ENCODE measurements at regions of chr12 and their contacts with region 1.

Region 1: GRCh38 chr12:10771132-10771733 is 31.2 kb downstream of the TAS2R7 start:
- DNase-seq: peak; percentile 51
- ATAC-seq: peak; percentile 86
- H3K4me3 ChIP-seq: no peak overlapping the region
- H3K27ac ChIP-seq: no peak overlapping the region
- H3K4me1 ChIP-seq: no peaks in the 10 kb centered on the region
- H3K27me3 ChIP-seq: peaks cover 24% of the 10 kb centered on the region
- CTCF ChIP-seq: peak; percentile 87
- POLR2A ChIP-seq: no peak
- RAD21 ChIP-seq: peak; percentile 82

Region 2: DNA sequence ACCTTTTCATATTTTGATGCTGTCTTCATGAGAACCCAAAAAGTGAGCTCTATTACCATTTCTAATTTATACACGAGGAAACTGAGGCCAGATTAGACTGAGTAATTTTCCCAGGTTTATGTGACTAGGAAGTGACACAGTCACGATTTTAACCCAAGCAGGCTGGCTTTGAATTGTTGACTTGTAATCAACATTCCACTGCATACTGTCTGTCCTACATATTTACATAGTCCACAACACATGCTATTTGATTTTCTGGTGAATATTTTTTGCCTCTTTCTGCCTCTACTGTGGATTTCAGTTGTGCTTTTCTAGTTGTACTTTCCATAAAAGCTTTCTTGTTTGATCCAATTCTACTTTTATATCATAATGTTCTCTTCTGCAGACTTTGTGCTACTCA is 23.0 kb after region 1 on chr12:
- CTCF ChIA-PET with region 1: no interaction called
- POLR2A ChIA-PET with region 1: no interaction called
- dilution Hi-C with region 1: no loop called
- in situ Hi-C with region 1: no loop called
- intact Hi-C with region 1: no loop called
- DNase-seq: no peak
- ATAC-seq: no peak
- H3K4me3 ChIP-seq: no peak overlapping the region
- H3K27ac ChIP-seq: no peak overlapping the region
- H3K4me1 ChIP-seq: no peaks in the 10 kb centered on the region
- H3K27me3 ChIP-seq: no peaks in the 10 kb centered on the region
- CTCF ChIP-seq: no peak
- POLR2A ChIP-seq: no peak
- RAD21 ChIP-seq: no peak

Region 3: DNA sequence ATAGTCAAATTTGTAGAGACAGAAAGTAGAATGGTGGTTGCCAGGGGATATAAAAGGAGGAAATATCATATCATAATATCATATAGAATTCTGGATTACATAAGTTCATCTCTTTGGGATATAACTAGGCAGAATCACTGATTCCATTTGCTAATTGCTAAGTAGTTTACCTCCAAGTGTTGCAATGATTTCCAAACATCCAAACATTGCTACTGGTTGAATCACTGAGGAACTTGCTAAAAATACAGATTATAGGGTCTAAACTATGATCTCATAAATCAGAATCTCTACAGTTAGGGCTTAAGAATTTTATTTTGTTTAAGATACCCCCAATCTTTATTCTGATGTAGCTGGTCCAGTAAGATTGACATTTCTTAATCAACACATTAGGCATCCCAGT is 431.6 kb after region 1 on chr12:
- CTCF ChIA-PET with region 1: interaction called, 16 read pairs
- POLR2A ChIA-PET with region 1: interaction called, 4 read pairs
- dilution Hi-C with region 1: loop called (anchors 25 kb)
- in situ Hi-C with region 1: loop called (anchors 5 kb)
- intact Hi-C with region 1: loop called (anchors 1 kb)
- DNase-seq: no peak
- ATAC-seq: no peak
- H3K4me3 ChIP-seq: no peak overlapping the region
- H3K27ac ChIP-seq: no peak overlapping the region
- H3K4me1 ChIP-seq: no peaks in the 10 kb centered on the region
- H3K27me3 ChIP-seq: no peaks in the 10 kb centered on the region; the same call in 1 of the 2 replicates
- CTCF ChIP-seq: no peak
- POLR2A ChIP-seq: no peak
- RAD21 ChIP-seq: no peak

Region 4: DNA sequence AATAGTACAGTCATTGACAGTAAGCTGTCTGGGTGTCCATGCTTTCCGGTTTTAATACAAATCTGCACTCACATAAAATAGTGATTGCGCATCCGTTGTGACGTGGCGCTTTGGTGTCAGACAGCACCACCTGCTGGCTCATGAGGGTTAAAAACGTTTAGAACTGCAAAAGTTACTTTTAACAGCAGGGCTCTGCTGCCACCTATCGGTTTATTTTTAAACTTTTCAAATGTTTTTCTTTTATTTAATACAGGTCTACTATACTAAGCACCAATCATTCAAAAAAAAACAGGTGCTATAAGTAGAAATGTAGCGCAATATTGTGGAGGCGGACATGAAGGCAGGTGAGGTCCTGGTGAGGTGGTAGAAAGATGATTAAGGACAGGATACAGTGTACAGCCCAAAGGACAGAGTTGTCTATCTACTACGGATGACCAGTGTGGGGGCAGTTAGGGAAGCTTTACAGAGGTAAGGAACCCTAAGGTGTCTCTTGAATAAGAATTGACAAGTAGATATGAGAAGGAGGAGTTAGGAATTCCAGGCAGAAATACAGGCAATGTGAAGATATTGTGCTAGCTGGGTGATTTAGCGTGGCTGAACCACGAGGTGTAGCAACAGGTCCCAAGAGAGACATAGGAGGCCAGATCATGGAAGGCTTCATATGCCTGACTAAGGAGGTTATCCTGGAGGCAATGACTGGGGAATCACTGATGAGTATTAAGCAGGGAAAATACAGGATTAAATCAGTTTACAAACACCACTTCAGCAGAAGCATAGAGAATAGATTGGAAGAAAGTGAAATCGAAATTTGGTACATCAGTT is 715.6 kb after region 1 on chr12:
- CTCF ChIA-PET with region 1: interaction called, 11 read pairs
- POLR2A ChIA-PET with region 1: no interaction called
- dilution Hi-C with region 1: no loop called
- in situ Hi-C with region 1: loop called (anchors 5 kb)
- intact Hi-C with region 1: loop called (anchors 1 kb)
- DNase-seq: peak; percentile 88
- ATAC-seq: peak; percentile 95
- H3K4me3 ChIP-seq: no peak overlapping the region
- H3K27ac ChIP-seq: no peak overlapping the region
- H3K4me1 ChIP-seq: no peaks in the 10 kb centered on the region
- H3K27me3 ChIP-seq: no peaks in the 10 kb centered on the region; the same call in 1 of the 2 replicates
- CTCF ChIP-seq: peak; percentile 100
- POLR2A ChIP-seq: no peak
- RAD21 ChIP-seq: peak; percentile 86

Measured in IMR-90 (cell line).